ENCODE measurements at regions of chr15 and their contacts with region 1.

Region 1: DNA sequence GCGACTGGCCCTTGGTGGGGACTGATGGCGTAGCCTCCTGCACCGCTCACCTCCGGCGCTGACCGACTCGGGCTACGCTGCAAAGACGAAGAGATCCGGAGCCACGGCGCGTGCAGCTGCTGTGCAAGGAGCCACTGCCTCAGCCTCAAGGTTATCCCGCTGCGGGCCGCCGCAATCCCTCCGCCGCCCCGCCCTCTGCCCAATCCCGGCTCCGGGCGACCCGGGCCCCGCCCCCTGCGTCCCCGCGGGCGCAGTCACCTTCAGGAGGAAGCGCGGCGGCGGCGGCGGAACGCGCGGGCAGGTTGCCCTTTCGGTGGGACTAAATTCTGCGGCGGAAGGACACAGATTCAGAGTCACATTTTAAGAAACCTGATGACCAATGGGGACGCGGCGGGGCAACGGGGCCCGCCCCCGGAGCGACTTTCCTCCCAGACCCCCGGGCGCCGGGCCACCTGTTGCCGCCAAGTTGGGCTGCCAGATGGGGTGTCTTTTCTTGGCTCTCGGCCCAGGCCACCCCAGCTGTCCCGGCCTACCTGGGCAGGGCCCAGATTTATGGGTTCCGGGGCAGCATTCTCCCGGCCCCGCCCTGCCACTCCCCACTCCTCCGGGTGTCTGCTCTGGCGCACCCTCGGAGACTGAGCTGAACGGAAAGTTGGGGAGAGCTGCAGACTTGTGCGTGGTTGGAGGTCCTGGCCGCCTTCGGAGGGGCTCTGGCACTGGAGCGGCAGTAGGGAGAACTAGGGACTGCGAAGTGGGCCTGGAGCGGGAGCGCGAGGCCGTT is at the start of gene PKM:
- DNase-seq: peak; percentile 99
- ATAC-seq: peak; percentile 70
- H3K4me3 ChIP-seq: peak within 1 kb of the TSS; percentile 82 to 94
- H3K27ac ChIP-seq: peak within 1 kb of the TSS; percentile 92
- H3K4me1 ChIP-seq: peaks cover 38 to 58% of the 10 kb centered on the region in 2 experiments
- H3K27me3 ChIP-seq: no peaks in the 10 kb centered on the region
- CTCF ChIP-seq: no peak
- POLR2A ChIP-seq: peak; percentile 97
- RAD21 ChIP-seq: no peak
- total RNA-seq, gene PKM: 1,664 TPM

Region 2: GRCh38 chr15:71294886-71295638 is 936.2 kb before region 1 on chr15:
- CTCF ChIA-PET with region 1: no interaction called
- POLR2A ChIA-PET with region 1: no interaction called
- RAD21 ChIA-PET with region 1: no interaction called
- intact Hi-C with region 1: loop called (anchors 10 kb)
- DNase-seq: peak; percentile 100
- ATAC-seq: peak; percentile 83
- H3K4me3 ChIP-seq: peak overlapping the region; percentile 1 to 51
- H3K27ac ChIP-seq: peak overlapping the region; percentile 97
- H3K4me1 ChIP-seq: peaks cover 49 to 65% of the 10 kb centered on the region in 2 experiments
- H3K27me3 ChIP-seq: no peaks in the 10 kb centered on the region
- CTCF ChIP-seq: no peak
- POLR2A ChIP-seq: no peak
- RAD21 ChIP-seq: peak; percentile 39; the same call in 1 of the 2 replicates

Region 3: GRCh38 chr15:71800835-71801745 is 430.2 kb before region 1 on chr15:
- CTCF ChIA-PET with region 1: no interaction called
- POLR2A ChIA-PET with region 1: no interaction called
- RAD21 ChIA-PET with region 1: no interaction called
- intact Hi-C with region 1: no loop called
- DNase-seq: peak; percentile 56
- ATAC-seq: peak; percentile 88
- H3K4me3 ChIP-seq: no peak overlapping the region
- H3K27ac ChIP-seq: no peak overlapping the region
- H3K4me1 ChIP-seq: no peaks in the 10 kb centered on the region; a peak in 1 of 4 replicates
- H3K27me3 ChIP-seq: no peaks in the 10 kb centered on the region
- CTCF ChIP-seq: peak; percentile 74 to 91 (median 82); a peak in 5 of 6 replicates
- POLR2A ChIP-seq: no peak
- RAD21 ChIP-seq: peak; percentile 94

Region 4: GRCh38 chr15:72199711-72200212 is 31.5 kb before region 1 on chr15:
- CTCF ChIA-PET with region 1: interaction called, 12 read pairs
- POLR2A ChIA-PET with region 1: interaction called, 9 read pairs
- RAD21 ChIA-PET with region 1: interaction called in 1 of 2 experiments, 9 read pairs
- intact Hi-C with region 1: no loop called
- DNase-seq: peak; percentile 65
- ATAC-seq: peak; percentile 53
- H3K4me3 ChIP-seq: no peak overlapping the region
- H3K27ac ChIP-seq: peak overlapping the region; percentile 0; the same call in 1 of the 2 replicates
- H3K4me1 ChIP-seq: peaks cover 5 to 32% of the 10 kb centered on the region in 2 experiments; a peak in 3 of 4 replicates
- H3K27me3 ChIP-seq: no peaks in the 10 kb centered on the region
- CTCF ChIP-seq: peak; percentile 59 to 95 (median 86); a peak in 5 of 6 replicates
- POLR2A ChIP-seq: no peak
- RAD21 ChIP-seq: peak; percentile 86

Region 5: GRCh38 chr15:72272213-72273002 is 41.2 kb after region 1 on chr15 and contains the start of gene PARP6:
- CTCF ChIA-PET with region 1: interaction called, 3 read pairs
- POLR2A ChIA-PET with region 1: no interaction called
- RAD21 ChIA-PET with region 1: no interaction called
- intact Hi-C with region 1: loop called (anchors 2 kb)
- DNase-seq: peak; percentile 97
- ATAC-seq: peak; percentile 96
- H3K4me3 ChIP-seq: peak within 1 kb of the TSS; percentile 79 to 91
- H3K27ac ChIP-seq: peak within 1 kb of the TSS; percentile 85
- H3K4me1 ChIP-seq: peaks cover 9 to 17% of the 10 kb centered on the region in 2 experiments; a peak in 2 of 4 replicates
- H3K27me3 ChIP-seq: no peaks in the 10 kb centered on the region
- CTCF ChIP-seq: peak; percentile 40 to 71 (median 56); a peak in 5 of 6 replicates
- POLR2A ChIP-seq: peak; percentile 57
- RAD21 ChIP-seq: no peak
- total RNA-seq, gene PARP6: 67.9 TPM

Region 6: GRCh38 chr15:72473614-72474465 is 242.6 kb after region 1 on chr15 and contains the start of gene ARIH1:
- CTCF ChIA-PET with region 1: no interaction called
- POLR2A ChIA-PET with region 1: no interaction called
- RAD21 ChIA-PET with region 1: no interaction called
- intact Hi-C with region 1: loop called (anchors 10 kb)
- DNase-seq: peak; percentile 87
- ATAC-seq: peak; percentile 83
- H3K4me3 ChIP-seq: peak within 1 kb of the TSS; percentile 83 to 89
- H3K27ac ChIP-seq: peak within 1 kb of the TSS; percentile 92
- H3K4me1 ChIP-seq: peaks cover 8 to 18% of the 10 kb centered on the region in 2 experiments; a peak in 3 of 4 replicates
- H3K27me3 ChIP-seq: no peaks in the 10 kb centered on the region
- CTCF ChIP-seq: peak; percentile 17 to 40 (median 25); a peak in 4 of 6 replicates
- POLR2A ChIP-seq: peak; percentile 87
- RAD21 ChIP-seq: peak; percentile 24; the same call in 1 of the 2 replicates
- total RNA-seq, gene ARIH1: 209 TPM

Region 7: DNA sequence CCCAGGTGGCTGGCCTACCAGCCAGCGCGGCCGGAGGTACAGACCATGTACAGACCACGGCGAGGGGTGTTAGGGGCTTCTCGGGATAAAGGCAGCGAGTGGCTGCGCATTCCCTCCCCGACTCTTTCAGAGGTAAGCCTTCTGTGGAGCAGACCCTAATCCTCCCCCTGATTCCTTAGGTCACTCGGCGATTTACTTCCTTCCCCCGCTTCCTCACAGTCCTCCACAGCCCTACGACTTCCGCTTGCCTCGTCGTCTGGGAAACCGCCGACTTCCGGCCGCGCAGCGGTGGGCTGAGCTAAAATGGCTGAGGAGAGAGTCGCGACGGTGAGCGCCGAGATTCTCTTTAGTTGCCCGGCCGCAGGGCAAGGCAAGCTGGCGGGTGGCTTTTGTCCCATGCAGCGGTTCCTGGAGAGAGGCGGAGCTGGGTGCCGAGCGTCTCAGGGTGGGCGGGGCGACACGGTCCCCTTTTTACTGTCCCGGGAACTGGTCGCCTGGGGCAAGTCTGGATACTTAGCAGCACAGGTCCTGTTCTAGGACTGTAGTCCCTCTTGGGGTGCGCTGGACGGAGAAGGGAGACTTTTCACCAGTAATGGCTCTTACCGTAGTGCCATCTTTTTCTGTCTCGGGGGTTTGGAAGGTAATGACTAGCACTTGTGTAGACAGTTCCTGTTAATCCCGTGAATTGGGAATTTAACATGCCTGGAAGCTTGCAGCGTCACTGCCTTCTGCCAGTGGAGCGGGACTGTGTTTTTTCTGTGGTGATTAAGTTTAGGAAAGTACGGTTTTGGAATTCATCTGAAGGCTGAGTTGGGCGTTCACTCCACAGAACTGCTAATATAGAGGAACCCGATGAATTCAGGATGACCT is 454.9 kb after region 1 on chr15 and contains the starts of genes BBS4 and HIGD2B:
- CTCF ChIA-PET with region 1: no interaction called
- POLR2A ChIA-PET with region 1: no interaction called
- RAD21 ChIA-PET with region 1: no interaction called
- intact Hi-C with region 1: no loop called
- DNase-seq: peak; percentile 90
- ATAC-seq: peak; percentile 93
- H3K4me3 ChIP-seq: peak within 1 kb of the TSS; percentile 64 to 75
- H3K27ac ChIP-seq: peak within 1 kb of the TSS; percentile 87
- H3K4me1 ChIP-seq: peaks cover 8 to 10% of the 10 kb centered on the region in 2 experiments; a peak in 3 of 4 replicates
- H3K27me3 ChIP-seq: no peaks in the 10 kb centered on the region
- CTCF ChIP-seq: no peak
- POLR2A ChIP-seq: peak; percentile 86
- RAD21 ChIP-seq: no peak
- total RNA-seq, gene BBS4: 10.0 TPM
- total RNA-seq, gene HIGD2B: 0.27 TPM